ENCODE measurements at regions of chr7 and their contacts with region 1.

Region 1: GRCh38 chr7:49643321-49643720 is 130.1 kb upstream of the VWC2 start:
- DNase-seq: no peak

Region 2: DNA sequence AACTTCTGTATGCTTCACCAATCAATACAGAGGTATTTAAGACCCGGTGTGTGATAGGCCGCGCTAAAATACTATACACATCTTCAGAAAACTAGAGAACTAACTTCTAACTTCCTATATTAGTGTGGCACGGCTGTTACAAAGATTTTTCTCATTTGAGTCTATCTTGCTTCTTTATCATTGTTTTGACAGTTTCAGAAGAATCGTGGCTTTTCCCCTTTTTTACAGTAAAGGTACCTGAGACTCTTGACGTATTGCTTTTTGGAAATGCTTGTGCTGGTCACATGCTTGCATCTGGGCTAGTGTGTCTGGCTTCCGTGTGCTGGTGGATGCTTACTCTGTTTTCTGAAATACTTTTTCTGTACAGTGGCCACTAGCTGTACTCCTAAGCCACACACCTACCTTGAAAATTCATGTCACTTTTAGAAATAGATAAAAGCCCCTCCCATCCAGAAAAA is 673.9 kb after region 1 on chr7:
- intact Hi-C with region 1: loop called in 1 of 2 experiments (anchors 10 kb)
- DNase-seq: no peak